ENCODE measurements at regions of chr1 and their contacts with region 1.

Region 1: DNA sequence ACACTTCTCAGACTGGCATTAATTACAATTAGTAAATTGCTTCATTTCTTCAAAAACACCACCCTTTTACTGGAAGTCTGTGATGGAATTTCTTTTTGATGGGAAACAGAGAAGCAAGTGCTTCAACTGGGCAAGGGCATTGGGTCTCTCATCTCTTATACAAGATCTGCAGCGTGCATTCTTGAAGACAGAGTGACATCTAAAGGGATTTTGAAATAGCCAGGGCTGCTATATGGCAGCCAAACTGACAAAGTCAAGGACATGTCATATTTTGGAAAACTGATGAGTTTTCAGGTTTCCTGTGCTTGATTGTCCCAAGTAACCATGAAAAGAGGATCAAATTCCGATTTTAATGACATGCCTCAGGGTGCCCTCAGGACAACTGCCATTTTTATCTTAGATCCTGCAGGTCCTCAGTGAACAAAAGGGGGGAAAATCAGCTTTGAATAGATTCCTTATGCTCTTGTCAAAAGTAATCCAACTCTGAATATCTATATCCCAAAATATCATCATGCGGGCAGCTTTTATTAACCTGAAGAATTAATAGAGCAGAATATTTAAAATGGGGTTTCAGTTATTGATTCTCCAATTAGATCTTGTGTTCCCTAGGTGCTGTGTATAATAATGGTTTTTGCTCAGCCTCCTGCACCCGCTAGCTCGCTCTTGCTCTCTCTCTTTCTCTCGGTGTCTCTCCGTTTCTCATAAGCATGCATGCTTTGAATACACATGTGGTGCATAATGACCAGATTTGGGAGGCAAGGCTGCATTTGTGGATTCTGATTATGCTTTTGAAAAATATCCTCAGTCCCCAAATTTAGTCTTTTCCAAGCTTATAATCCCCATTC is 221.8 kb downstream of the TTLL7 start:
- DNase-seq: peak; percentile 21
- H3K4me3 ChIP-seq: no peak overlapping the region
- H3K27ac ChIP-seq: no peak overlapping the region
- H3K4me1 ChIP-seq: no peaks in the 10 kb centered on the region
- CTCF ChIP-seq: no peak; the same call in 1 of the 2 replicates

Region 2: GRCh38 chr1:83626603-83627002 is 150.5 kb before region 1 on chr1:
- CTCF ChIA-PET with region 1: no interaction called
- POLR2A ChIA-PET with region 1: no interaction called
- intact Hi-C with region 1: no loop called
- DNase-seq: peak; percentile 85
- H3K4me3 ChIP-seq: peak overlapping the region; percentile 13
- H3K27ac ChIP-seq: peak overlapping the region; percentile 36
- H3K4me1 ChIP-seq: peaks cover 19% of the 10 kb centered on the region
- CTCF ChIP-seq: no peak

Region 3: GRCh38 chr1:83813576-83813975 is 36.4 kb after region 1 on chr1:
- CTCF ChIA-PET with region 1: no interaction called
- POLR2A ChIA-PET with region 1: interaction called, 3 read pairs
- intact Hi-C with region 1: loop called (anchors 5 kb)
- DNase-seq: no peak
- H3K4me3 ChIP-seq: no peak overlapping the region
- H3K27ac ChIP-seq: no peak overlapping the region
- H3K4me1 ChIP-seq: no peaks in the 10 kb centered on the region
- CTCF ChIP-seq: no peak